ENCODE measurements at regions of chr2 and their contacts with region 1.

Region 1: DNA sequence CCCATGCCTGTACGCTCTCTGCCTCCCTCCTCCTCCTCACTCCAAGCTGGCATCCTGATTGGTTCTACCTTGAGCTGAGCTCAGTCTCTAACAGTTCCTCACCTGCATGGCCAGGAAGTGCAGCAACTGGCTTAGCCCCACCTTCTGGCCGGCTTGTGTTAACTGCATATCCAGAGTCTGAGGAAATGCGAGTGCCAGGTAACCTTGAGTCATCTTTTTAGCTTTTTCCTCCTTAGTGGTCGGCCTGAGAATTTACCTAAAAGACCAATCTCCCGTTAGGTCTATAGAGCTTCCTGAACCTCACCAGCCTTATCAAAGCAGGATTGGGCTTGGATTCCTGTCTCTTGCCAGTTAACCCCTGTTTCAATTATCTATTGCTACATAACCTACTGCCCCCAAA is 89.5 kb upstream of the STK39 start:
- DNase-seq: peak; percentile 46 to 66 (median 58)
- H3K4me3 ChIP-seq: no peak overlapping the region
- H3K4me3 Mint-ChIP-seq: no peak overlapping the region
- H3K27ac ChIP-seq: no peak overlapping the region
- H3K27ac Mint-ChIP-seq: peak overlapping the region in 1 of 7 donors; percentile 38
- H3K4me1 ChIP-seq: peaks cover 4% of the 10 kb centered on the region
- H3K4me1 Mint-ChIP-seq: peaks cover 2 to 8% (median 4%) of the 10 kb centered on the region in 4 donors
- H3K27me3 ChIP-seq: no peaks in the 10 kb centered on the region
- H3K27me3 Mint-ChIP-seq: peaks cover 2 to 4% of the 10 kb centered on the region in 2 donors

Region 2: GRCh38 chr2:167114026-167114425 is 1222.8 kb before region 1 on chr2:
- CTCF ChIA-PET with region 1: no interaction called
- POLR2A ChIA-PET with region 1: no interaction called
- intact Hi-C with region 1: no loop called
- DNase-seq: no peak
- H3K4me3 ChIP-seq: no peak overlapping the region
- H3K4me3 Mint-ChIP-seq: no peak overlapping the region
- H3K27ac ChIP-seq: no peak overlapping the region
- H3K27ac Mint-ChIP-seq: no peak overlapping the region
- H3K4me1 ChIP-seq: no peaks in the 10 kb centered on the region
- H3K4me1 Mint-ChIP-seq: no peaks in the 10 kb centered on the region
- H3K27me3 ChIP-seq: no peaks in the 10 kb centered on the region
- H3K27me3 Mint-ChIP-seq: peaks cover 0 to 2% of the 10 kb centered on the region in 2 donors

Region 3: GRCh38 chr2:168136392-168136977 is 200.4 kb before region 1 on chr2:
- CTCF ChIA-PET with region 1: interaction called, 52 read pairs
- POLR2A ChIA-PET with region 1: interaction called, 4 read pairs
- intact Hi-C with region 1: loop called (anchors 1 kb)
- DNase-seq: peak in 4 of 5 donors; percentile 19 to 41 (median 30)
- H3K4me3 ChIP-seq: no peak overlapping the region
- H3K4me3 Mint-ChIP-seq: no peak overlapping the region
- H3K27ac ChIP-seq: no peak overlapping the region
- H3K27ac Mint-ChIP-seq: peak overlapping the region in 1 of 7 donors; percentile 73
- H3K4me1 ChIP-seq: no peaks in the 10 kb centered on the region
- H3K4me1 Mint-ChIP-seq: peaks cover 8 to 25% (median 21%) of the 10 kb centered on the region in 4 donors
- H3K27me3 ChIP-seq: no peaks in the 10 kb centered on the region
- H3K27me3 Mint-ChIP-seq: no peaks in the 10 kb centered on the region

Region 4: DNA sequence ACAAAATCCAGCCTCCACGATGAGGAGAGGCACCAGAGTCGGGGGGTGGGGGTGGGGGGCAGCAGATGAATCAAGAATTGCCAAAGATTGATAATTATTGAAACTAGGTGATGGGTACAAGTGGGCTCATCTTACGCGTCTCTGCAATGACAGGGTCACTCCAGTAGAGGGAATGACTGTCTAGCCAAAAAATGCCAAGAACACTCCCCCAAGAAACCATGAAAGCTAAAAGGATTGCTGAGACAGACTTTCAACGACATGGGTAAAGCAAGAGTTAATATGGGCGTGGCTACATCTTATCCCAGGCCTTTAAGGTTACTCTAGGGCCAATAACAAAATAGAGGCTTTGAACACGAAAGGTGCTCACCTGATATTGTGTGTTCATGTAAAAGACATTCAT is 176.0 kb before region 1 on chr2:
- CTCF ChIA-PET with region 1: interaction called, 30 read pairs
- POLR2A ChIA-PET with region 1: interaction called, 3 read pairs
- intact Hi-C with region 1: loop called (anchors 1 kb)
- DNase-seq: peak in 3 of 5 donors; percentile 11 to 17 (median 14)
- H3K4me3 ChIP-seq: no peak overlapping the region
- H3K4me3 Mint-ChIP-seq: no peak overlapping the region
- H3K27ac ChIP-seq: no peak overlapping the region
- H3K27ac Mint-ChIP-seq: peak overlapping the region in 2 of 7 donors; percentile 29 to 56
- H3K4me1 ChIP-seq: peaks cover 11% of the 10 kb centered on the region
- H3K4me1 Mint-ChIP-seq: peaks cover 17 to 34% (median 28%) of the 10 kb centered on the region in 4 donors
- H3K27me3 ChIP-seq: no peaks in the 10 kb centered on the region
- H3K27me3 Mint-ChIP-seq: no peaks in the 10 kb centered on the region

Region 5: DNA sequence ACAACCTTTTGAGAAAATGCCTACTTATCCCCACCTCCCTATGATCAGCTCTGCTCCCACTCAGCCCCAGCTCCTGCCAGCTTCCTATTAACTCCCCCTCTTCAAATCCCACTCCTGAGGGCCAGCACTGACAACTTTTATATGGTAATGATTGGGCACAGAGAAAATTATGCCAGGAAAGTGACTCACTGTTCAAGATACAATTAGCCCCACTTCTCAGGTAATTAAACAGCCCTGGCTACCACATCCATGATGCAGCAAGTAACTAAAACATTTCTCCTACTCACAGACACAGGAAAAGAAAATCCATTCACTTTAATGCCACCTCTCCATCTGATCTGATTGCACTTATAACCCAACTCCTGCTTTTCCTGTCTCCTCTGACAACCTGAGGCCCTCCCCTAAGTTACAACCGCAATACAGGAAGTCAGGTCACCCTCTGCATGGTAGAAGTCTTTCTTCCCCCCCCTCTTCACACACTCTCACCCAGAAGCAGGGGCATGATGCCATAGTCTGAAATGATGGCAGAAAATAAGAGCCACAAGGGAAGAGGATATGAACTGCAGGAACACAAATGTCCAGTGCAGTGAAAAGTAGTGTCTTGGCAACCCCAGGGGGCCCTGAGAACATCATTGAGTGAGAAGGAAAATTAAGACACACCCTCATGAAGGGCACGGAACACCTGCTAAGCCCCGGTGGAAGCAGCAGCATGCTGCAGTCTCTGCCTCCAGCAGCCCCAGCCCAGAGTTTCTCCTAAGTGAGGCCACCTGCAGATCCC is 143.8 kb before region 1 on chr2:
- CTCF ChIA-PET with region 1: interaction called, 15 read pairs
- POLR2A ChIA-PET with region 1: no interaction called
- intact Hi-C with region 1: no loop called
- DNase-seq: peak; percentile 64 to 80 (median 70)
- H3K4me3 ChIP-seq: peak overlapping the region in 1 of 2 donors; percentile 25
- H3K4me3 Mint-ChIP-seq: peak overlapping the region; percentile 60 to 87 (median 76)
- H3K27ac ChIP-seq: no peak overlapping the region
- H3K27ac Mint-ChIP-seq: peak overlapping the region; percentile 5 to 91 (median 74)
- H3K4me1 ChIP-seq: peaks cover 76% of the 10 kb centered on the region
- H3K4me1 Mint-ChIP-seq: peaks cover 61 to 92% (median 75%) of the 10 kb centered on the region in 4 donors
- H3K27me3 ChIP-seq: no peaks in the 10 kb centered on the region
- H3K27me3 Mint-ChIP-seq: no peaks in the 10 kb centered on the region

Region 6: DNA sequence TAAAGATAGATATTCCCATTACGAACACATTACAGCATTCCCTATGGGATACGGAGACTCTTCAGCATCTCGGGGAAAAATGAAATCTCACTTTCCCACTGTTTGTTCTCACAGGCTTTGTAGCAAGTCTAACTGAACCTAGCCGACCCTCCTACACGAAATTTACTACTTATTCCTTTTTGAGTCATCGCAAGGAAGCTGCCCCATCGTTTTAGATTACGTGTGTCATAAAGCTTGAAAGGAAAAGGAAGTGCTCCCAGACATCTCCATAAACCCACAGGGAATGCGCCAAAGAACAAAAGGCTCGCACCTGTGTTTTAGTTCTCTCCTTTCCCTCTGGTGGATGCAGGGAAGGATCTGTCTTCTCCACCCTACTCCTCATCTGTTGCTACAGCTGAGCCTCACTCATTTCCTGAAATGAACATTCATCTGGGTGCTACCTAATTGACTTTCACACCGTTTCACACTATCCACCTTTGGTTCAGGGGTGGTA is 13.3 kb before region 1 on chr2:
- CTCF ChIA-PET with region 1: interaction called, 22 read pairs
- POLR2A ChIA-PET with region 1: no interaction called
- intact Hi-C with region 1: no loop called
- DNase-seq: no peak
- H3K4me3 ChIP-seq: no peak overlapping the region
- H3K4me3 Mint-ChIP-seq: no peak overlapping the region
- H3K27ac ChIP-seq: no peak overlapping the region
- H3K27ac Mint-ChIP-seq: peak overlapping the region in 1 of 7 donors; percentile 9
- H3K4me1 ChIP-seq: no peaks in the 10 kb centered on the region
- H3K4me1 Mint-ChIP-seq: peaks cover 0 to 3% (median 2%) of the 10 kb centered on the region in 4 donors
- H3K27me3 ChIP-seq: peaks cover 10% of the 10 kb centered on the region
- H3K27me3 Mint-ChIP-seq: peaks cover 19 to 22% of the 10 kb centered on the region in 2 donors

Region 7: GRCh38 chr2:168404764-168405163 is 67.9 kb after region 1 on chr2:
- CTCF ChIA-PET with region 1: no interaction called
- POLR2A ChIA-PET with region 1: no interaction called
- intact Hi-C with region 1: no loop called
- DNase-seq: no peak
- H3K4me3 ChIP-seq: no peak overlapping the region
- H3K4me3 Mint-ChIP-seq: no peak overlapping the region
- H3K27ac ChIP-seq: no peak overlapping the region
- H3K27ac Mint-ChIP-seq: no peak overlapping the region
- H3K4me1 ChIP-seq: peaks cover 5% of the 10 kb centered on the region
- H3K4me1 Mint-ChIP-seq: peaks cover 0 to 6% (median 6%) of the 10 kb centered on the region in 4 donors
- H3K27me3 ChIP-seq: no peaks in the 10 kb centered on the region
- H3K27me3 Mint-ChIP-seq: peaks cover 2% of the 10 kb centered on the region in 2 donors

Region 8: DNA sequence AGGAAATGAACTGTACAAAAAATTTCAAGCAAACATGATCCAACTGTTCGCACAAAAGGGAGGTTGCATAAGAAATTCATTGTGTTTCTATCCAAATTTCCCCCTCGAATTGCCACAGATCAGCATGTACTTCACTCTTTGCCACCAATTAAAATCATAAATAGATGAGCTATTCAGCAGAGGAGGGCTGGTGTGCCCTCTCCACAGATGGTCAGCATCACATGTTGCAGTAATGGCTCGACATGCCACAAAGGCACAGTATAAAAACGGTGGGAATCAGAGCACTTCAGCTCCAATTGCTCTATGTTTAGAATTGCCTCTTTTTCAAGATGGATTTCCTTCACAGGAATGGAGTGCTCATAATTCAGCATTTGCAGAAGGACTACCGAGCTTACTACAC is 564.1 kb after region 1 on chr2 and contains the start of gene G6PC2:
- CTCF ChIA-PET with region 1: no interaction called
- POLR2A ChIA-PET with region 1: no interaction called
- intact Hi-C with region 1: no loop called
- DNase-seq: no peak
- H3K4me3 ChIP-seq: no peak within 1 kb of the TSS
- H3K4me3 Mint-ChIP-seq: no peak within 1 kb of the TSS
- H3K27ac ChIP-seq: no peak within 1 kb of the TSS
- H3K27ac Mint-ChIP-seq: no peak within 1 kb of the TSS
- H3K4me1 ChIP-seq: no peaks in the 10 kb centered on the region
- H3K4me1 Mint-ChIP-seq: no peaks in the 10 kb centered on the region
- H3K27me3 ChIP-seq: no peaks in the 10 kb centered on the region
- H3K27me3 Mint-ChIP-seq: peaks cover 8 to 17% of the 10 kb centered on the region in 2 donors
- total RNA-seq, gene G6PC2: not detected